GM12878 (cell line): ENCODE measurements at regions of chr14 and their contacts with region 1.

Region 1: DNA sequence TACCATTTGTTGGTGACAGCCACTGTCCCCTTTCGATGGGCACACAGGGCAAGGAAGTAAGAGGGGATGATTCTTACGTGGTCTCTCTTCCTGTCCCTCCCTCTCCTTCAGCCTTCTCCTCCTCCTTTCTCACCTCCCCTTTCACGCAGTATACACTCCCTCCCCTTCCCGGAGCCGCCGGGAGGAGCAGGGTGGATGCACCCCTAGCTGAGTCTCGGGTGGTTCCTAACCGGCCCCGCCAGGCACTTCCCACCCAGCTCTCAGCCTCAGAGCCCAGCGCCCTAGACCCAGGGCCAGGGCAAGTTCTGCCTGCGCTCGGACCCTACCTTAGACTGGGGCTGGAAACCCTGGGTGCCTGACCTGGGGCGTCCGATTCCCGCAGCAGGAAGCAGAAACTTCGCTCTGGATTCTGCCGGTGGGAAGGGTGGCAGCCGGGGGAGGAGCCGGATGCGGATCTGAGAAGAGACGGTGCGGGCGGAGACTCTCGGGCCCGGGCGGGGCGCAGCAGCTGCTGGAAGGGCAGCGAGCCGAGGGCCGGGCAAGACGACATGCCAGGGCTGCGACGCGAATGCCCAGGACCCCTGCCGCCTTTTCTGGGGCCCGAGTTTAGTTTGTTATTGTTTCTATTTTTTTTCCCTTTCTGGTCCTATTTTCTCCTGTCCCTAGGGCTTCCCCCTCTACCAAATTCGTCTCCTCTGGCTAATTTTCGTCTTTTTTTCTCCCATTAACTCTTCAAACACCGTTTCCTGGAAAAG is at the start of gene TEP1:
- DNase-seq: no peak
- ATAC-seq: peak; percentile 94
- H3K4me3 ChIP-seq: peak within 1 kb of the TSS; percentile 99
- H3K27ac ChIP-seq: peak within 1 kb of the TSS; percentile 94
- H3K4me1 ChIP-seq: peaks cover 4% of the 10 kb centered on the region
- H3K27me3 ChIP-seq: no peaks in the 10 kb centered on the region
- CTCF ChIP-seq: no peak
- EP300 ChIP-seq: no peak
- POLR2A ChIP-seq: peak; percentile 71
- RAD21 ChIP-seq: no peak
- polyA plus RNA-seq, gene TEP1: 3.3 to 6.4 TPM

Region 2: DNA sequence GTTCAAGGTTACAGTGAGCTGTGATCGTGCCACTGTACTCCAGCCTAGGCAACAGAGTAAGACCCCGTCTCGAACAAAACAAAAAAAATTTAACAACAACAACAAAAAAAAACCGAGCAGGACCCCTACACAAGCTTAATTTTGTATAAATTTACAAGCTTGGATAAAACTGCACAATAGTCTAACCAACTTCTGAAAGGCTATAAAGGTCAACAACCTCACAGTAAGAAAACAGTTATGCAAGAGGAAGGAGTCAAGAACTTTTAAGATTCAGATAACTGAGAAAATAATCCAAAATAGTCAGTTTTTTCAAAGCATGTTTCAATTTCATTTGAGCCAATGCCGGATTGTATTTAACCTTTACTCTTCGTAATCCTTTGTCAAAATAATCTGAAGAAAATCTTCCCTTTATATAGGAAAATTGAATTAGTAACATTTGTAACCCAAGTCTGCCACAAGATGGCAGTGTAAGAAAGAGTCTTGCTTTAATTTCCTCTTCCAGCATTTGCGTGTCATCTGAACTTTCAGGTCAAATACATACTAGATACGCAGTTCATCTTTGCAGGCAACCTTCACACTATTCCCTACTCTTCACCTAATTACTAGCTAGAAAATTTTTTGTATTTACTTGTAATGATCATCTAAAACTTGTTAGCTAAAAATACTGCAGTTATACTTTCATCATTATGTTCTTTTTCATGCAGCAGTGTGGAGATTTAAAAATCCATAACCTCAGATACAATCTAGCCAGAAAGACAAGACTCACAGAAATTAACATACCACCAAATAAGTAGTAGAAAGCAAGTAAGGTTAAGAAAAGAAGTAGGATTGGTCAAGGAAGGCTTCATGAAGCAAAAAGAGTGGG is 86.0 kb before region 1 on chr14:
- CTCF ChIA-PET with region 1: interaction called, 91 read pairs
- POLR2A ChIA-PET with region 1: interaction called, 8 read pairs
- RAD21 ChIA-PET with region 1: interaction called, 78 read pairs
- SMC1A ChIA-PET with region 1: interaction called, 56 read pairs
- in situ Hi-C with region 1: no loop called
- intact Hi-C with region 1: loop called (anchors 1 kb)
- DNase-seq: peak; percentile 35
- ATAC-seq: peak; percentile 62
- H3K4me3 ChIP-seq: peak overlapping the region; percentile 50; the same call in 1 of the 2 replicates
- H3K27ac ChIP-seq: no peak overlapping the region
- H3K4me1 ChIP-seq: no peaks in the 10 kb centered on the region
- H3K27me3 ChIP-seq: no peaks in the 10 kb centered on the region
- CTCF ChIP-seq: peak; percentile 51 to 81 (median 62); a peak in 5 of 6 replicates
- EP300 ChIP-seq: no peak
- POLR2A ChIP-seq: no peak
- RAD21 ChIP-seq: peak; percentile 80

Region 3: GRCh38 chr14:20400965-20401593 is 12.1 kb before region 1 on chr14:
- CTCF ChIA-PET with region 1: interaction called, 13 read pairs
- POLR2A ChIA-PET with region 1: interaction called, 5 read pairs
- RAD21 ChIA-PET with region 1: interaction called, 4 read pairs
- SMC1A ChIA-PET with region 1: interaction called, 10 read pairs
- in situ Hi-C with region 1: no loop called
- intact Hi-C with region 1: no loop called
- DNase-seq: no peak
- ATAC-seq: no peak
- H3K4me3 ChIP-seq: no peak overlapping the region
- H3K27ac ChIP-seq: no peak overlapping the region
- H3K4me1 ChIP-seq: no peaks in the 10 kb centered on the region
- H3K27me3 ChIP-seq: no peaks in the 10 kb centered on the region
- CTCF ChIP-seq: no peak
- EP300 ChIP-seq: no peak
- POLR2A ChIP-seq: no peak
- RAD21 ChIP-seq: no peak

Region 4: GRCh38 chr14:20454516-20455354 is 41.5 kb after region 1 on chr14 and contains the starts of genes APEX1 and OSGEP:
- CTCF ChIA-PET with region 1: interaction called, 48 read pairs
- POLR2A ChIA-PET with region 1: interaction called, 27 read pairs
- RAD21 ChIA-PET with region 1: interaction called, 17 read pairs
- SMC1A ChIA-PET with region 1: interaction called, 27 read pairs
- in situ Hi-C with region 1: loop called (anchors 5 kb)
- intact Hi-C with region 1: loop called (anchors 2 kb)
- DNase-seq: peak; percentile 99
- ATAC-seq: peak; percentile 93
- H3K4me3 ChIP-seq: peak within 1 kb of the TSS; percentile 83
- H3K27ac ChIP-seq: peak within 1 kb of the TSS; percentile 98
- H3K4me1 ChIP-seq: peaks cover under 1% of the 10 kb centered on the region
- H3K27me3 ChIP-seq: no peaks in the 10 kb centered on the region
- CTCF ChIP-seq: no peak
- EP300 ChIP-seq: peak in 1 of 2 experiments; percentile 63; a peak in 2 of 4 replicates
- POLR2A ChIP-seq: peak; percentile 93
- RAD21 ChIP-seq: no peak
- polyA plus RNA-seq, gene APEX1: 299 to 320 TPM
- polyA plus RNA-seq, gene OSGEP: 48.9 to 49.4 TPM

Region 5: DNA sequence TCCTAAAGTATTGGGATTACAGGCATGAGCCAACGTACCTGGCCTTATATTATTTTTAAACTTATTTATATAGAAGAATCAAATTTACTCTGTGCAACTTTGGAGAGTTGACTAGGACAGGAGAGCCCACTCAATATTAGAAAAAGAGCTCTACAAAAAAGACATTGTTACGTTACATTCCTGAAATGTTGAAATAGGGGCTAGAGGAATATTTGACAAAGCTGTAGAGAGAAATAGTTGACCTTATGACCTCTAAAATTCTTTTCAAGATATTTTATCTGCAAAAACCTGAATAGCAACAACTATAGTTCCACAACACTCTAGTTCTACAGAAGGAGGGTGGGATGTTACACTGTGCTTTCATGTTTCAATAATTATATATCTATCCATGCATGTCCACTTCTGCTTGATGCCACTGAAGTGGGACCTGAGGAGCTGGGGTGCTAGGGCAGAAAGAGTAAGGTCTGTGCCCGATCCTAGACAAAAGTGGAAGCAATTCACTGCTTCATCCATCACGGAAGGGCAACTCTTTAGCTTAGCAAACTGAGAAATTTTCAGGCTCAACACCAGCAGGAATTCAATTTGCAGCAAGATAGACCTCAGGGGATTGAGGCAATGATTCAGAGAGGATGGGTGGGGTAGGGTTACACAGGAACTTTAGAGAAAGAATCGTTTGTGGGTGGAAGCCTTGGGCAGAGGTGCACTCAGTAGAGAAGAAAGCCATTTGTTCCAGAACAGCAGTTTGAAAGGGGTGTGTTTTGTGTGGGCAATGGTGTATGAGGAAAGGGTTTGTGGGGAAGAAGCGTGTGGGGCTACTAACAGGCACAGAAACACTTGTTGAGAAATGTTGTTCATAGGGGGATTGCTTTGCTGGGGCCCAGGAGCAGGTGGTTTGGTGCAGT is 76.1 kb after region 1 on chr14:
- CTCF ChIA-PET with region 1: interaction called, 41 read pairs
- POLR2A ChIA-PET with region 1: interaction called, 4 read pairs
- RAD21 ChIA-PET with region 1: interaction called, 9 read pairs
- SMC1A ChIA-PET with region 1: interaction called, 15 read pairs
- in situ Hi-C with region 1: no loop called
- intact Hi-C with region 1: loop called (anchors 1 kb)
- DNase-seq: peak; percentile 72
- ATAC-seq: peak; percentile 36
- H3K4me3 ChIP-seq: peak overlapping the region; percentile 41
- H3K27ac ChIP-seq: peak overlapping the region; percentile 1; the same call in 1 of the 2 replicates
- H3K4me1 ChIP-seq: peaks cover 35% of the 10 kb centered on the region
- H3K27me3 ChIP-seq: no peaks in the 10 kb centered on the region
- CTCF ChIP-seq: no peak
- EP300 ChIP-seq: no peak
- POLR2A ChIP-seq: no peak
- RAD21 ChIP-seq: no peak

Region 6: DNA sequence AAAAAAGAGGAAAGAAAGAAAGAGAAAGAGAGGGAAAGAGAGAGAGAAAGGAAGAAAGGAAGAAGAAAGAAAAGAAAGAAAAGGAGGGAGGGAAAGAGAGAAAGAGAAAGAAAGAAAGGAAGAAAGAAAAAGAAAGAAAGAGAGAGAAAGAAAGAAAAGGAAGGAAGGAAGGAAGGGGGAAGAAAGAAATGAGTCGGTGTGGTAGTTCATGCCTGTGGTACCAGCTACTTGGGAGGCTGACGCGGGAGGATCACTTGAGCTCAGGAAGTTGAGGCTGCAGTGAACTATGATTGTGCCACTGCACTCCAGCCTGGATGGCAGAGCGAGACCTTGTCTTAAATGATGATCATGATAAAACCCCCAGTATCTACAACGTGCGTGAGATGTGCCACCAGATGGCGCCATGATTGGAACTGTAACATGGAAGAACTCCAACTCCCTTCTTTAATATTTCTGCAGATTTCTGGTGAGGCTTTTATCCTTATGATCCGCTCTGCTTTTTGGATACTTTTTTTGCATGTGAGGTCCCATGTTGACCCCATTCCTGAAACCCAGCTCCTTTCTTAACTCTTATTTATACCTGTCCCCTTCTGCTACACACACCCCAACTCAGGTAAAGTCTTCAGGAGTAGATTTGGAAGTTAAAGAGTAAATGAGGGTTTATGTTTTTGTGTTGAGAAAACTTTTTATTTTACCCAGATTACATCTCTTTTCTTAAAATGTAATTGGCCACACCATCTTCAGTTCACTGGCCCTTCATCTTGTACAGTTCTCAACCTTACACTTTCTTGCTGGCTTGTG is 117.7 kb after region 1 on chr14:
- CTCF ChIA-PET with region 1: interaction called, 24 read pairs
- POLR2A ChIA-PET with region 1: no interaction called
- RAD21 ChIA-PET with region 1: interaction called, 9 read pairs
- SMC1A ChIA-PET with region 1: interaction called, 17 read pairs
- in situ Hi-C with region 1: no loop called
- intact Hi-C with region 1: loop called (anchors 5 kb)
- DNase-seq: peak; percentile 21
- ATAC-seq: peak; percentile 98
- H3K4me3 ChIP-seq: no peak overlapping the region
- H3K27ac ChIP-seq: no peak overlapping the region
- H3K4me1 ChIP-seq: no peaks in the 10 kb centered on the region
- H3K27me3 ChIP-seq: no peaks in the 10 kb centered on the region
- CTCF ChIP-seq: peak; percentile 65 to 75 (median 73)
- EP300 ChIP-seq: no peak
- POLR2A ChIP-seq: no peak
- RAD21 ChIP-seq: peak; percentile 66

Region 7: DNA sequence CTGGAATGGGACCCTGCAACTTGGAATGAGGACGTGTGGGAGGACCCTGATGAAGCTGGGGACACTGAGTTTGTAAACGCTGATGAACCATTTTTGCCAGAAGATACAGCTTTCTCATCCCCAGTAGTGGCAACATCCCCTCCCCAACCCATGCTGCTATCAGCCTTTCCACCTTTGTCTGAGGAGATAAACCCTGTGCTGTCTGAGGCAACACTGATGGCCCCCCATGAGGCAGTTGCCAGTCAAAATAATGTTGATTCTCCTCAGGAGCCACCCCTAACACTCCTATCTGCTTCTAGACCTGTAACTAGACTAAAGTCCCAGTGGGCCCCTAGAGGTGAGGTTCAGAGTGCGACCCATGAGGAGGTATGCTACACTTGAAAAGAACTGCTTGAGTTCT is 155.2 kb after region 1 on chr14:
- CTCF ChIA-PET with region 1: no interaction called
- POLR2A ChIA-PET with region 1: no interaction called
- RAD21 ChIA-PET with region 1: no interaction called
- SMC1A ChIA-PET with region 1: no interaction called
- in situ Hi-C with region 1: no loop called
- intact Hi-C with region 1: no loop called
- DNase-seq: no peak
- ATAC-seq: no peak
- H3K4me3 ChIP-seq: no peak overlapping the region
- H3K27ac ChIP-seq: no peak overlapping the region
- H3K4me1 ChIP-seq: no peaks in the 10 kb centered on the region
- H3K27me3 ChIP-seq: no peaks in the 10 kb centered on the region
- CTCF ChIP-seq: no peak
- EP300 ChIP-seq: no peak
- POLR2A ChIP-seq: no peak
- RAD21 ChIP-seq: no peak

Region 8: DNA sequence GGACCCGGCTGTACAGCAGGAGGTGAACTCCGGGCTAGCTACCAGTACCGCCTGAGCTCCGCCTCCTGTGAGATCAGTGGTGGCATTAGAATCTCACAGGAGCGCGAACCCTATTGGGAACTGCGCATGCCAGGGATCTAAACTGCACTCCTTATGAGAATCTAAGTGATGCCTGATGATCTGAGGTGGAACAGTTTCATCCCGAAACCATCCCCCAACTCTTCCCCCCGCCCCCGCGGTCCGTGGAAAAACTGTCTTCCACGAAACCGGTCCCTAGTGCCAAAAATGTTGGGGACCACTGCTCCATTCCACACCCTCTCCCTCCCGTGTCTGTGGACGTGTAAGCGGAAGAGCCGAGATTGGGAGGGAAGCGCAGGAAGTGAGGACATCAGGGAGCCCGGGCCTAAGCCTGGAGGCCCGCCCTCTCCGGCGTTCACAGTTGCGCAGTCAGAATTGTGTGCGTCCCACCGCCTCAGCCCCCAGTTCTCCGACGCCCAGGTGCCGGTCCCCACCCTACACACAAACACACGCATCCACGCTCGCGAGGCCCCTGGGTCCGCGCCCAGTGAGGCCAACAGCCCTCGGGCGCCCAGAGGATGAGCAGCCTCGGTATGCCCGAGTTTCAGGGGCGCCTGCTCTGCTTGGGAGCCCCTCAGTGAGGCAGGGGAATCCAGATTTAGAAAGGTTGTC is 269.4 kb after region 1 on chr14:
- CTCF ChIA-PET with region 1: no interaction called
- POLR2A ChIA-PET with region 1: no interaction called
- RAD21 ChIA-PET with region 1: interaction called, 5 read pairs
- SMC1A ChIA-PET with region 1: interaction called, 9 read pairs
- in situ Hi-C with region 1: no loop called
- intact Hi-C with region 1: loop called (anchors 5 kb)
- DNase-seq: no peak
- ATAC-seq: peak; percentile 74
- H3K4me3 ChIP-seq: peak overlapping the region; percentile 73
- H3K27ac ChIP-seq: peak overlapping the region; percentile 99
- H3K4me1 ChIP-seq: peaks cover 23% of the 10 kb centered on the region
- H3K27me3 ChIP-seq: no peaks in the 10 kb centered on the region
- CTCF ChIP-seq: no peak
- EP300 ChIP-seq: no peak
- POLR2A ChIP-seq: peak; percentile 87
- RAD21 ChIP-seq: no peak